ENCODE measurements at regions of chr6 and their contacts with region 1.

Region 1: DNA sequence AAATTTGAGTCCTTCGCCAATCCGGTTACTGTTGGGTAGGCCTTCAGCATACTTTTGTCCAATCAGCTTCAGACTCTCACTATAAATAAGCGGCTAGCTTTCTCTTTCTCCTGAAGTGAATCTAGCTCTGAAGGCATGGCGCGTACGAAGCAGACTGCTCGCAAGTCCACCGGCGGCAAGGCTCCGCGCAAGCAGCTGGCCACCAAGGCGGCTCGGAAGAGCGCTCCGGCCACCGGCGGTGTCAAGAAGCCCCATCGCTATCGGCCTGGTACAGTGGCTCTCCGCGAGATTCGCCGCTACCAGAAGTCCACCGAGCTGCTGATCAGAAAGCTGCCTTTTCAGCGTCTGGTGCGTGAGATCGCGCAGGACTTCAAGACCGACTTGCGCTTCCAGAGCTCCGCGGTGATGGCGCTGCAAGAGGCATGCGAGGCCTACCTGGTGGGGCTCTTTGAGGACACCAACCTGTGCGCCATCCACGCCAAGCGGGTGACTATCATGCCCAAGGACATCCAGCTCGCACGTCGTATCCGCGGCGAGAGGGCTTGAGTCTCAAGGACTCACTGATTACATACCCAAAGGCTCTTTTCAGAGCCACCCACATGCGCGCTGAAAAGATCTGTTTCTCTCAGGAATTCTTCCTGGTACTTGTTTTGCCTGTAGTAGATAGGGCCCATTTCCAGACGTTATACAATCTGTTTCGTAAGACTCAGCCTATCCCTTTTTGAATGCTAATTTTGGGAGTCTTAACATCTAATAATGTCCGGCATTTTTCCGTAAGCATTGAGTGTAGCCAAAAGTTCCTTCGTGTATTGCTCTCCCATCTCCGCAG is 102.0 kb downstream of the OR2B2 start:
- DNase-seq: peak; percentile 64 to 93 (median 88)
- H3K4me3 ChIP-seq: peak overlapping the region; percentile 78
- H3K4me3 Mint-ChIP-seq: peak overlapping the region; percentile 85 to 97 (median 94)
- H3K27ac ChIP-seq: peak overlapping the region; percentile 93
- H3K27ac Mint-ChIP-seq: peak overlapping the region; percentile 94 to 100 (median 97)
- H3K4me1 ChIP-seq: peaks cover 38% of the 10 kb centered on the region
- H3K4me1 Mint-ChIP-seq: peaks cover 54 to 69% (median 65%) of the 10 kb centered on the region in 3 donors
- H3K27me3 ChIP-seq: no peaks in the 10 kb centered on the region
- H3K27me3 Mint-ChIP-seq: peaks cover 0 to 6% of the 10 kb centered on the region in 2 donors

Region 2: DNA sequence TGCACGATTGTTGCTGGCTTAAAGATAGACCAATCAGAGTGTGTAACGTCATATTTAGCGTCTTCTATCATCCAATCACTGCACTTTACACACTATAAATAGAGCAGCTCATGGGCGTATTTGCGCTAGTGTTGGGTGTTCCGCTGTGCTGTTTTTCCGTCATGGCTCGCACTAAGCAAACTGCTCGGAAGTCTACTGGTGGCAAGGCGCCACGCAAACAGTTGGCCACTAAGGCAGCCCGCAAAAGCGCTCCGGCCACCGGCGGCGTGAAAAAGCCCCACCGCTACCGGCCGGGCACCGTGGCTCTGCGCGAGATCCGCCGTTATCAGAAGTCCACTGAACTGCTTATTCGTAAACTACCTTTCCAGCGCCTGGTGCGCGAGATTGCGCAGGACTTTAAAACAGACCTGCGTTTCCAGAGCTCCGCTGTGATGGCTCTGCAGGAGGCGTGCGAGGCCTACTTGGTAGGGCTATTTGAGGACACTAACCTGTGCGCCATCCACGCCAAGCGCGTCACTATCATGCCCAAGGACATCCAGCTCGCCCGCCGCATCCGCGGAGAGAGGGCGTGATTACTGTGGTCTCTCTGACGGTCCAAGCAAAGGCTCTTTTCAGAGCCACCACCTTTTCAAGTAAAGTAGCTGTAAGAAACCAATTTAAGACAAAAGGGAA is 1789.7 kb before region 1 on chr6:
- CTCF ChIA-PET with region 1: no interaction called
- POLR2A ChIA-PET with region 1: interaction called, 11 read pairs
- DNase-seq: peak; percentile 68 to 92 (median 88)
- H3K4me3 ChIP-seq: peak overlapping the region; percentile 93
- H3K4me3 Mint-ChIP-seq: peak overlapping the region; percentile 81 to 99 (median 95)
- H3K27ac ChIP-seq: peak overlapping the region; percentile 98
- H3K27ac Mint-ChIP-seq: peak overlapping the region; percentile 93 to 100 (median 100)
- H3K4me1 ChIP-seq: peaks cover 14% of the 10 kb centered on the region
- H3K4me1 Mint-ChIP-seq: peaks cover 30 to 57% (median 44%) of the 10 kb centered on the region in 3 donors
- H3K27me3 ChIP-seq: no peaks in the 10 kb centered on the region
- H3K27me3 Mint-ChIP-seq: peaks cover 0 to 12% of the 10 kb centered on the region in 2 donors

Region 3: DNA sequence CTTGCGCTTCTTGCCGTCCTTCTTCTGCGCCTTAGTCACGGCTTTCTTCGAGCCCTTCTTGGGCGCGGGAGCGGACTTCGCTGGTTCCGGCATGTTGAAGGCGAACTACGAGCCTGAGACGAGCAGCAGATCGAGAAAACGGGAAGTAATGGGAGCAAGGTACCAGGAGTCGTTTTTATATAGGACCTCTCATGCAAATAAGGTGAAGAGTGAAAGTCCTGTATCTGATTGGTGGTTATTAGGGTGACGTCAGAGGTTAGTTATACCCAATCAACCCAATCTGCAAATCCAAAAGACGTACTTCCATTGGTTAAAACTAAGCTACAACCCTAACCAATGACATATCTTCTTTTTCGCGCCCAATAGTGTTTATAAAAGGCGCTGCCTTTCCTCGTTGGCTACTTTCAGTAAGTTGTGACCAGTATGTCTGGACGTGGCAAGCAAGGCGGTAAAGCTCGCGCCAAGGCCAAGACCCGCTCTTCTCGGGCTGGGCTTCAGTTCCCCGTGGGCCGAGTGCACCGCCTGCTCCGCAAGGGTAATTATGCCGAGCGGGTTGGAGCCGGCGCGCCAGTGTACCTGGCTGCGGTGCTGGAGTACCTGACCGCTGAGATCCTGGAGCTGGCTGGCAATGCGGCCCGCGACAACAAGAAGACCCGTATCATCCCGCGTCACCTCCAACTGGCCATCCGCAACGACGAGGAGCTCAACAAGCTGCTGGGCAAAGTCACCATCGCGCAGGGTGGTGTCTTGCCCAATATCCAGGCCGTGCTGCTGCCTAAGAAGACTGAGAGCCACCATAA is 663.2 kb before region 1 on chr6:
- CTCF ChIA-PET with region 1: interaction called, 7 read pairs
- POLR2A ChIA-PET with region 1: interaction called, 29 read pairs
- DNase-seq: peak; percentile 42 to 93 (median 89)
- H3K4me3 ChIP-seq: peak overlapping the region; percentile 97
- H3K4me3 Mint-ChIP-seq: no peak overlapping the region
- H3K27ac ChIP-seq: peak overlapping the region; percentile 91
- H3K27ac Mint-ChIP-seq: no peak overlapping the region
- H3K4me1 ChIP-seq: peaks cover 20% of the 10 kb centered on the region
- H3K4me1 Mint-ChIP-seq: peaks cover 7 to 21% (median 10%) of the 10 kb centered on the region in 3 donors
- H3K27me3 ChIP-seq: no peaks in the 10 kb centered on the region
- H3K27me3 Mint-ChIP-seq: no peaks in the 10 kb centered on the region

Region 4: GRCh38 chr6:27213544-27214125 is 596.5 kb before region 1 on chr6:
- CTCF ChIA-PET with region 1: no interaction called
- POLR2A ChIA-PET with region 1: no interaction called
- DNase-seq: no peak
- H3K4me3 ChIP-seq: no peak overlapping the region
- H3K4me3 Mint-ChIP-seq: no peak overlapping the region
- H3K27ac ChIP-seq: peak overlapping the region; percentile 64
- H3K27ac Mint-ChIP-seq: no peak overlapping the region
- H3K4me1 ChIP-seq: no peaks in the 10 kb centered on the region
- H3K4me1 Mint-ChIP-seq: peaks cover 0 to 1% (median 0%) of the 10 kb centered on the region in 3 donors
- H3K27me3 ChIP-seq: no peaks in the 10 kb centered on the region
- H3K27me3 Mint-ChIP-seq: peaks cover 50 to 69% of the 10 kb centered on the region in 2 donors

Region 5: DNA sequence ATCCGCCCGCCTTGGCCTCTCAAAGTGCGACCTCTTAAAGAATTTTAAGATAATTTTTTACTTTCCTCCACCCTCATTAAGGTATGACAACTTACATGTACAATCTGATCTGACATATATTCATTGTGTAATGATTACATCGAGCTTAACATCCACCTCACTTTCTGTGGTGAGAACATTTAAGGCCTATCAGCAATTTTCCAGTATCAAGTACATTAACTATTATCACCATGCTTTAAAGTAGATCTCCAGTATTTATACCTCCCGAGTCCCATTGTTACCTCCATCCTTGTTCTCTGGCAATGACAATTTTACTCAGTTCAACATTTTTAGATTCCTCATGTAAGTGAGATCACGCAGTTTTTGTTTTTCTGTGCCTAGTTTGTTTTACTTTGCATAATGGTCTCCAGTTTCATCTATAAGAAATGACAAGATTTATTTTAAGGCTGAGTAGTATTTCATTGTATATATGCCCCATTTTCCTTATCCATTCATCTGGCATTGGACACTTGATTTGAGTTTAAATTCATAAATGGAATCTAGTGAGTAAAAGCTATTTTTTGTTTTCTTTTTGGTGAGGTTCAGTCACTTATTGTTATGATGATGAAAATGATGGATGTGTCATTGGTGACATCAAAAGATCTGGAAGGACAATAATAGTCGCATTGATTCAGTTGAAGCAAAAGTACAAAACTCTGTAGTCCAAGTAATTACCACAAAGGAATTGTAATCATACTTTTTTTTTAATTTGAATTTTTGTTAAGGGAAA is 15.1 kb after region 1 on chr6:
- CTCF ChIA-PET with region 1: interaction called, 26 read pairs
- POLR2A ChIA-PET with region 1: interaction called, 88 read pairs
- DNase-seq: no peak
- H3K4me3 ChIP-seq: peak overlapping the region; percentile 91
- H3K4me3 Mint-ChIP-seq: peak overlapping the region; percentile 82 to 97 (median 90)
- H3K27ac ChIP-seq: peak overlapping the region; percentile 96
- H3K27ac Mint-ChIP-seq: peak overlapping the region; percentile 93 to 100 (median 98)
- H3K4me1 ChIP-seq: peaks cover 14% of the 10 kb centered on the region
- H3K4me1 Mint-ChIP-seq: peaks cover 31 to 42% (median 38%) of the 10 kb centered on the region in 3 donors
- H3K27me3 ChIP-seq: no peaks in the 10 kb centered on the region
- H3K27me3 Mint-ChIP-seq: no peaks in the 10 kb centered on the region

Region 6: DNA sequence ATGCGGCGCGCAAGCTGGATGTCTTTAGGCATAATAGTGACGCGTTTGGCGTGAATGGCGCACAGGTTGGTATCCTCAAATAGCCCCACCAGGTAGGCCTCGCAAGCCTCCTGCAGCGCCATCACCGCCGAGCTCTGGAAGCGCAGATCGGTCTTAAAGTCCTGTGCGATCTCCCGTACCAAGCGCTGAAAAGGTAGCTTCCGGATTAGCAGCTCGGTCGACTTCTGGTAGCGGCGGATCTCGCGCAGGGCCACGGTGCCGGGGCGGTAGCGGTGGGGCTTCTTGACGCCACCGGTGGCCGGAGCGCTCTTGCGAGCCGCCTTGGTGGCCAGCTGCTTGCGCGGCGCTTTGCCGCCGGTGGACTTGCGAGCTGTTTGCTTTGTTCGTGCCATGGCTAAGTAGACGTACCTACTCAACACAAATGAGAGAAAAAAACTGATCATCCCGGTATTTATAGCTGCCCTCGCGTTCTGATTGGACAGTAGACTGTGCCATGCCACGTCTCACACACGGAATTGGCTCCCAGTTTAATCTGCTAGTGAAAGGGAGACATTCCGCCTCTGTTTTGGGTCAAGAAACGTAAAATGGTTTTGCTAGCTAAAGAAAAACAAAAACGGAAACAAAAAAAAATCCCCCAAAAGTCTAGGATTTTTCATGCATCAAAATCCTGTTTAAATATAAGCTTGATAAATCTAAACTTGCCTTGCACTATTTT is 61.9 kb after region 1 on chr6:
- CTCF ChIA-PET with region 1: interaction called, 110 read pairs
- POLR2A ChIA-PET with region 1: interaction called, 124 read pairs
- DNase-seq: peak; percentile 69 to 95 (median 91)
- H3K4me3 ChIP-seq: peak overlapping the region; percentile 71
- H3K4me3 Mint-ChIP-seq: peak overlapping the region; percentile 82 to 95 (median 88)
- H3K27ac ChIP-seq: peak overlapping the region; percentile 71
- H3K27ac Mint-ChIP-seq: peak overlapping the region; percentile 90 to 99 (median 94)
- H3K4me1 ChIP-seq: peaks cover 24% of the 10 kb centered on the region
- H3K4me1 Mint-ChIP-seq: peaks cover 31 to 39% (median 37%) of the 10 kb centered on the region in 3 donors
- H3K27me3 ChIP-seq: no peaks in the 10 kb centered on the region
- H3K27me3 Mint-ChIP-seq: peaks cover 0 to 3% of the 10 kb centered on the region in 2 donors